Uterus (tissue), 4 donors: ENCODE measurements at regions of chr19 and their contacts with region 1.

Region 1: GRCh38 chr19:10644260-10645007 is 9.7 kb upstream of the ILF3 start:
- DNase-seq: peak; percentile 82 to 86
- H3K4me3 ChIP-seq: no peak overlapping the region
- H3K27ac ChIP-seq: peak overlapping the region; percentile 53 to 55
- H3K4me1 ChIP-seq: peaks cover 0 to 5% of the 10 kb centered on the region in 2 donors
- H3K27me3 ChIP-seq: no peaks in the 10 kb centered on the region
- CTCF ChIP-seq: peak; percentile 86 to 96 (median 91)
- POLR2A ChIP-seq: no peak

Region 2: DNA sequence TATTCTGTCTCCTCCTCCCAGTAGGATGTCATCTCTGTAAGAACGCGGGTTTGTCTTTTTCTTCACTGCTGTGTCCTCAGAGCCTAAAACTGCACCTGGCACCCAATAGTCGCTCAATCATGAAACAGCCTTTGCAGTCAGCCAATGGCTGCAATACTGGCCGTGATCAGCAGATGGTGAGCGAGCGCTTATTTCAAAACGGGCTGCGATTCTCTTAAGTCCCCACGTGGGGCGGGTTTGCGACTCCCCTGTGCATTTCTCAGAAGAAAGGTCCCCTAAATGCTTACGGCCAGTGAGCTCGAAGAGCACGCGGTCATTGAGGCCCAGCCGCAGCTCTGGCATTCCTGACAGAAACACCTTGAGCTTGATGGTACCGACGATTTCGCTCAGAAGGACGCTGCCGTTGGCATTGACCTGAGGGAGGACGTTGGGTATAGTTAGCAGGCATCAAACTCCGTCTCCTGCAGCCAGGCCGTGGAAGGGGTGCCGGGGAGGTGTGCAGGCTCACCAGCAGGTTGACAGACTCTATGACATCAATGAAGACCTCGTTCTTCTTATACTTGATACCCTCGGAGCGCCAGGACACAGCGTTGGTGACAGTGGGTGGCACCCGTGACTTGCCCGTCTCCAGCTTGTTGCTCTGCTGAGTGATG is 63.3 kb before region 1 on chr19:
- intact Hi-C with region 1: loop called (anchors 5 kb)
- DNase-seq: peak; percentile 89 to 90
- H3K4me3 ChIP-seq: no peak overlapping the region
- H3K27ac ChIP-seq: no peak overlapping the region
- H3K4me1 ChIP-seq: no peaks in the 10 kb centered on the region
- H3K27me3 ChIP-seq: no peaks in the 10 kb centered on the region
- CTCF ChIP-seq: peak; percentile 97 to 100 (median 99)
- POLR2A ChIP-seq: peak in 1 of 2 donors; percentile 24

Region 3: DNA sequence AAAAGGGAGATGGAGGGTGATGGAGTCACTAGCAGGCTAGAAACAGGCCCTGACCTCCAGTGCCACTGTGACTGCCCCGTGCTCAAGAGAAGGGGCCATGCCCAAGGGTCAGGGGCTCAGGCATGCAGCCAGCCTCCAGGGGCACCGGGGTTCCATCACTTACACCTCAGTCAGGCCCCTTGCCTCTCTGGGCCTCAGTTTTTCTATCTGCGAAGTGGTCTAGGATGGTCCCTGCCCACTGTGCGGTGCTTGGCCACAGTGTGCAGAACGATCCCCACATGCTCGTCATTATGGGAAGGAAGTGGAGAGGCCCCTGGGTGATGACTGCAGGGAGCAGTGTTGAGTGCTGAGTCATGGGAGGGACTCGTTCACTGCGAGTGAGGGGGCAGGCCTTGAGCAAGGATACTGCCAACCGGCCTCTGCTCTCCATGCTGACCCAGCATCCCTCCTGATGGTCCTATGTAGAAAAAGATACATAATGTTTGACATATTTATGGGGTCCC is 168.5 kb after region 1 on chr19:
- intact Hi-C with region 1: no loop called
- DNase-seq: peak; percentile 64 to 66
- H3K4me3 ChIP-seq: no peak overlapping the region
- H3K27ac ChIP-seq: peak overlapping the region; percentile 39 to 64
- H3K4me1 ChIP-seq: peaks cover 0 to 8% of the 10 kb centered on the region in 2 donors
- H3K27me3 ChIP-seq: no peaks in the 10 kb centered on the region
- CTCF ChIP-seq: no peak
- POLR2A ChIP-seq: no peak